ENCODE measurements at regions of chr12 and their contacts with region 1.

Region 1: GRCh38 chr12:77324763-77325468 is 259.5 kb upstream of the E2F7 start:
- DNase-seq: no peak
- H3K4me3 ChIP-seq: peak overlapping the region; percentile 78
- H3K27ac ChIP-seq: no peak overlapping the region
- H3K27me3 ChIP-seq: no peaks in the 10 kb centered on the region
- CTCF ChIP-seq: peak; percentile 55

Region 2: DNA sequence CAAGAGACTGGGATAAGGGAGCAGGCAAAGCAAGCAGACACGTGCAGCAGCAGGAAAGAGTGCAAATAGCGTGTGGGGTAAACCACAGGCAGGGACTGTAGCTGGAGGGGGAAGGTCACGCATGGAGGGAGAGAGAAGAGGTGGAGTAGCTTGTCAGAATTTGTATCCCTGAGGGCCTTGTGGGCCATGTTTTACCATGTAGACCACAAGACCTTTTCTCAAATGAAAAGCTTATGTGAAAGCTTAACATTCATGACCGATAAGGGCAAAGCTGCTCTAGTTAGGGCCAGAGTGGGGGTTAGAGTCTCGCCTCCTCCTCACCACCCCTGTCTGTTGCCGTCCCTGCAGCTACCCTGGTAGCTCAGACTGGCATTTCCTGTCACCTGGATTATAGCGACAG is 106.6 kb before region 1 on chr12:
- CTCF ChIA-PET with region 1: no interaction called
- POLR2A ChIA-PET with region 1: no interaction called
- DNase-seq: no peak
- H3K4me3 ChIP-seq: no peak overlapping the region
- H3K27ac ChIP-seq: no peak overlapping the region
- H3K27me3 ChIP-seq: no peaks in the 10 kb centered on the region
- CTCF ChIP-seq: no peak

Region 3: GRCh38 chr12:77308056-77308455 is 16.9 kb before region 1 on chr12:
- CTCF ChIA-PET with region 1: interaction called, 11 read pairs
- POLR2A ChIA-PET with region 1: no interaction called
- DNase-seq: no peak
- H3K4me3 ChIP-seq: no peak overlapping the region
- H3K27ac ChIP-seq: no peak overlapping the region
- H3K27me3 ChIP-seq: no peaks in the 10 kb centered on the region
- CTCF ChIP-seq: no peak

Region 4: GRCh38 chr12:77314378-77315052 is 10.4 kb before region 1 on chr12:
- CTCF ChIA-PET with region 1: interaction called, 31 read pairs
- POLR2A ChIA-PET with region 1: no interaction called
- DNase-seq: no peak
- H3K4me3 ChIP-seq: no peak overlapping the region
- H3K27ac ChIP-seq: no peak overlapping the region
- H3K27me3 ChIP-seq: no peaks in the 10 kb centered on the region
- CTCF ChIP-seq: no peak

Region 5: DNA sequence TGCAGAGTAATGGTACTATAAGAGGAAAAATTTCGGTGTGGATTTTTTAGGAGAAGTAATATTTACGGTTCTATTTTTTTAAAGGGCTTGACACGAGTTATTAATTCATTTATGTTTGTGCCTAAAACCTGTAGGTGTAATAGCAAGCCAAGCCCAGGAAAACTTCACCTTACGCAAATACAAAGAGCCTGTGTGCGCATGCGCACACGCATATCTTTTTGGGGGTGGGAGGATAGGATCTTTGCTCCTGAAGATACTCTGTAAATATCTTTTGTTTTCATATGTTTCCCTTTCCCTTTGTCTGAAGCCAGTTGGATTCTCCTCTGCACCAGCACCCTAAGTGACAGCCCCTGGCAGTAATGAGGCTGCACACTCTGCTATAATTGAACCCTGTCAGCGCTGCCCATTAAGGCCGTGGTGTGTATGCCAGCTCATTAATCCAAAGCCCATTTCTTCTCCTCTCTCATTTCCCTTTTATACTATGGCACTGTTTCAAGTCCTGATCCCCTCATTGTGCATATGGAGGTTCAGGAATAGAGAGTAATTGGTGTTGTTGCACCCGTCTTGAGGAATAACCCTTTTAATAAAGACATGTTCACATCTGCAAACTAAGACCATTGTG is 67.7 kb after region 1 on chr12:
- CTCF ChIA-PET with region 1: no interaction called
- POLR2A ChIA-PET with region 1: no interaction called
- DNase-seq: no peak
- H3K4me3 ChIP-seq: no peak overlapping the region
- H3K27ac ChIP-seq: no peak overlapping the region
- H3K27me3 ChIP-seq: no peaks in the 10 kb centered on the region
- CTCF ChIP-seq: no peak